Activated naive CD4-positive, alpha-beta T cell treated with anti-CD3 and anti-CD28 coated beads for 36 hours (primary cell): ENCODE measurements at regions of chr5 and their contacts with region 1.

Region 1: DNA sequence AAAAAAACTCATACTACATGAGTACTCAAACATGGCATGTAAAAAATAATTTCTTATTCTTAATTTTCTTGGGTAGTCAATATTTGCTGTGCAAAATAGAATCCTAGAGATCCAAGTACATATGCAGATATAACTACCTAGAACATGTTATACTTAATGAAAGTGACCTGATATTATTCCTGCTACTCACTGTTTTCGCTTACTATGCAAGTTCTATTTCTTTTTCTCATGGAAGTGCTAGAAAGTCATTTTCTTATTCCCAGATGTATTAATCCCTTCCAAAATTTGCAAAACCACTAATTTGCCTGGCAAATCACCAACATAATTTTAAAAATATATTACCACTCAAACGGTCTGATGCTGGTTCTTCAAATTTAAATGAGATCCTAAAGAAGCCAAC is 19.2 kb upstream of the PLAC8L1 start:
- DNase-seq: no peak
- H3K4me3 Mint-ChIP-seq: no peak overlapping the region
- H3K27ac Mint-ChIP-seq: no peak overlapping the region
- H3K4me1 Mint-ChIP-seq: no peaks in the 10 kb centered on the region
- H3K27me3 Mint-ChIP-seq: no peaks in the 10 kb centered on the region

Region 2: DNA sequence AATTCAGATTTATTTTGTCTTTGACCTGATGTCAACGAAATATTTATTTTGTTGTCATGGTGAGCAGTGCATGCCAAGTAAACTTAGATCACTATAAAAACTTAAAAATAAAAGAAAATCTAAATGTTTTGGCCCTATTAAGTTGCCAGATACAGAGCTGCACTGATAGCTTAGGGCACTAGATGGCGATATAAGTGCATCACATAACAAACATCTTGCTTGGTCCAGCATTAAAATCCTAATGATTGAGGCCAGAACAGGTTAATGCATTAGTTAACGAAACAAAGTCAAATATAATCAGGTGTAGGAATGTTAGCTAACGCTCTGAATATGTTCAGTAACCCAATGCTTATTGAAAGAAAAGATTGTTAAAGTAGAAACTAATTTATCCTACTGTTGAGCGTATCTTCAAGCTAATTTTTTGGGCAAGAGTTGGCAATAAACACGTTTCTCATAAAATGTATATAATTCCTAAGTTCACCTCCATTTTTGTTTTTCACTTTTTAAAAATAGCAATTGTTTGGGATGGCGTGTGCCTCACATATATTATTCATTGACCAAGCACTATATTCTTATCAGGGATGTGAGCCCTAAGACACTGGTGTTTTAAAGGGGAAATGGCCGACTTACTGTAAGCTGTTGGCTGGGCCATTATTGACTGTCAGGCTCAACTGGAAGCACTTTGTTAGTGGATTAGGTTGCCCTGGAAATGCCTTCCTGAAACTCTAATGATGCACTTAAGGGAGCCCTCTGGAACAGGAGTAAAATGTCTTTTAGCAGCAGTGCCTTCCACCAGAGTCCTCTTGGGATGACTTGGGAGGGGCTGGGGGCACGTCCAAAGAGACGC is 1920.6 kb before region 1 on chr5:
- CTCF ChIA-PET with region 1: no interaction called
- intact Hi-C with region 1: loop called (anchors 10 kb)
- DNase-seq: peak; percentile 65
- H3K4me3 Mint-ChIP-seq: no peak overlapping the region
- H3K27ac Mint-ChIP-seq: no peak overlapping the region
- H3K4me1 Mint-ChIP-seq: peaks cover 17% of the 10 kb centered on the region
- H3K27me3 Mint-ChIP-seq: peaks cover 38% of the 10 kb centered on the region

Region 3: GRCh38 chr5:145483212-145483611 is 641.4 kb before region 1 on chr5:
- CTCF ChIA-PET with region 1: no interaction called
- intact Hi-C with region 1: no loop called
- DNase-seq: no peak
- H3K4me3 Mint-ChIP-seq: no peak overlapping the region
- H3K27ac Mint-ChIP-seq: no peak overlapping the region
- H3K4me1 Mint-ChIP-seq: no peaks in the 10 kb centered on the region
- H3K27me3 Mint-ChIP-seq: no peaks in the 10 kb centered on the region

Region 4: GRCh38 chr5:146165460-146165859 is 40.9 kb after region 1 on chr5:
- CTCF ChIA-PET with region 1: no interaction called
- intact Hi-C with region 1: loop called (anchors 5 kb)
- DNase-seq: no peak
- H3K4me3 Mint-ChIP-seq: no peak overlapping the region
- H3K27ac Mint-ChIP-seq: no peak overlapping the region
- H3K4me1 Mint-ChIP-seq: peaks cover 5% of the 10 kb centered on the region
- H3K27me3 Mint-ChIP-seq: no peaks in the 10 kb centered on the region

Region 5: GRCh38 chr5:146466521-146467349 is 342.2 kb after region 1 on chr5:
- CTCF ChIA-PET with region 1: no interaction called
- intact Hi-C with region 1: loop called (anchors 10 kb)
- DNase-seq: no peak
- H3K4me3 Mint-ChIP-seq: no peak overlapping the region
- H3K27ac Mint-ChIP-seq: no peak overlapping the region
- H3K4me1 Mint-ChIP-seq: peaks cover 18% of the 10 kb centered on the region
- H3K27me3 Mint-ChIP-seq: no peaks in the 10 kb centered on the region